ENCODE measurements at regions of chr16 and their contacts with region 1.

Region 1: GRCh38 chr16:67806428-67807147 is at the starts of genes RANBP10 and TSNAXIP1:
- DNase-seq: peak; percentile 100
- ATAC-seq: peak; percentile 95
- H3K4me3 ChIP-seq: peak within 1 kb of the TSS; percentile 92 to 98 (median 98)
- H3K27ac ChIP-seq: peak within 1 kb of the TSS; percentile 72
- H3K4me1 ChIP-seq: peaks cover 42% of the 10 kb centered on the region
- H3K27me3 ChIP-seq: no peaks in the 10 kb centered on the region; a peak in 1 of 5 replicates
- CTCF ChIP-seq: no peak
- EP300 ChIP-seq: peak in 1 of 2 experiments; percentile 33; a peak in 2 of 4 replicates
- POLR2A ChIP-seq: peak; percentile 84 to 94; a peak in 3 of 4 replicates
- RAD21 ChIP-seq: no peak; the same call in 1 of the 2 replicates
- total RNA-seq, gene RANBP10: 8.5 and 9.2 TPM in 2 replicates
- total RNA-seq, gene TSNAXIP1: 0.10 and 0.86 TPM in 2 replicates

Region 2: GRCh38 chr16:67667817-67668494 is 138.6 kb before region 1 on chr16:
- CTCF ChIA-PET with region 1: interaction called, 4 read pairs
- POLR2A ChIA-PET with region 1: interaction called, 12 read pairs
- in situ Hi-C with region 1: loop called (anchors 5 kb)
- intact Hi-C with region 1: loop called (anchors 2 kb)
- DNase-seq: peak; percentile 96
- ATAC-seq: peak; percentile 88
- H3K4me3 ChIP-seq: peak overlapping the region; percentile 77 to 96 (median 88)
- H3K27ac ChIP-seq: peak overlapping the region; percentile 21
- H3K4me1 ChIP-seq: peaks cover 39% of the 10 kb centered on the region
- H3K27me3 ChIP-seq: no peaks in the 10 kb centered on the region; a peak in 1 of 5 replicates
- CTCF ChIP-seq: peak; percentile 99
- EP300 ChIP-seq: no peak
- POLR2A ChIP-seq: peak in 1 of 2 experiments; percentile 24; a peak in 1 of 4 replicates
- RAD21 ChIP-seq: peak; percentile 98

Region 3: GRCh38 chr16:67672739-67673662 is 133.6 kb before region 1 on chr16:
- CTCF ChIA-PET with region 1: interaction called, 4 read pairs
- POLR2A ChIA-PET with region 1: interaction called, 12 read pairs
- in situ Hi-C with region 1: loop called (anchors 5 kb)
- intact Hi-C with region 1: loop called (anchors 2 kb)
- DNase-seq: peak; percentile 72
- ATAC-seq: peak; percentile 45
- H3K4me3 ChIP-seq: no peak overlapping the region
- H3K27ac ChIP-seq: no peak overlapping the region
- H3K4me1 ChIP-seq: peaks cover 21% of the 10 kb centered on the region
- H3K27me3 ChIP-seq: no peaks in the 10 kb centered on the region
- CTCF ChIP-seq: peak; percentile 95
- EP300 ChIP-seq: no peak
- POLR2A ChIP-seq: no peak
- RAD21 ChIP-seq: peak; percentile 93

Region 4: GRCh38 chr16:67719048-67719777 is 87.4 kb before region 1 on chr16 and contains the start of gene GFOD2:
- CTCF ChIA-PET with region 1: no interaction called
- POLR2A ChIA-PET with region 1: interaction called, 18 read pairs
- in situ Hi-C with region 1: no loop called
- intact Hi-C with region 1: loop called (anchors 5 kb)
- DNase-seq: peak; percentile 91
- ATAC-seq: peak; percentile 83
- H3K4me3 ChIP-seq: peak within 1 kb of the TSS; percentile 93 to 94 (median 94)
- H3K27ac ChIP-seq: peak within 1 kb of the TSS; percentile 67
- H3K4me1 ChIP-seq: peaks cover 42% of the 10 kb centered on the region
- H3K27me3 ChIP-seq: no peaks in the 10 kb centered on the region; a peak in 1 of 5 replicates
- CTCF ChIP-seq: peak; percentile 35
- EP300 ChIP-seq: no peak
- POLR2A ChIP-seq: peak; percentile 92 to 99
- RAD21 ChIP-seq: peak; percentile 23; the same call in 1 of the 2 replicates
- total RNA-seq, gene GFOD2: 17.2 and 17.6 TPM in 2 replicates

Region 5: GRCh38 chr16:67833418-67834241 is 27.0 kb after region 1 on chr16:
- CTCF ChIA-PET with region 1: no interaction called
- POLR2A ChIA-PET with region 1: interaction called, 13 read pairs
- in situ Hi-C with region 1: no loop called
- intact Hi-C with region 1: no loop called
- DNase-seq: peak; percentile 89
- ATAC-seq: peak; percentile 98
- H3K4me3 ChIP-seq: peak overlapping the region; percentile 75 to 91 (median 75)
- H3K27ac ChIP-seq: peak overlapping the region; percentile 59
- H3K4me1 ChIP-seq: peaks cover 37% of the 10 kb centered on the region
- H3K27me3 ChIP-seq: no peaks in the 10 kb centered on the region; a peak in 1 of 5 replicates
- CTCF ChIP-seq: no peak; the same call in 1 of the 2 replicates
- EP300 ChIP-seq: 0 out of 4 replicates have a peak, but pooled peaks of 1 of the 2 experiments have one; percentile 41
- POLR2A ChIP-seq: peak; percentile 92 to 99
- RAD21 ChIP-seq: peak; percentile 36; the same call in 1 of the 2 replicates

Region 6: DNA sequence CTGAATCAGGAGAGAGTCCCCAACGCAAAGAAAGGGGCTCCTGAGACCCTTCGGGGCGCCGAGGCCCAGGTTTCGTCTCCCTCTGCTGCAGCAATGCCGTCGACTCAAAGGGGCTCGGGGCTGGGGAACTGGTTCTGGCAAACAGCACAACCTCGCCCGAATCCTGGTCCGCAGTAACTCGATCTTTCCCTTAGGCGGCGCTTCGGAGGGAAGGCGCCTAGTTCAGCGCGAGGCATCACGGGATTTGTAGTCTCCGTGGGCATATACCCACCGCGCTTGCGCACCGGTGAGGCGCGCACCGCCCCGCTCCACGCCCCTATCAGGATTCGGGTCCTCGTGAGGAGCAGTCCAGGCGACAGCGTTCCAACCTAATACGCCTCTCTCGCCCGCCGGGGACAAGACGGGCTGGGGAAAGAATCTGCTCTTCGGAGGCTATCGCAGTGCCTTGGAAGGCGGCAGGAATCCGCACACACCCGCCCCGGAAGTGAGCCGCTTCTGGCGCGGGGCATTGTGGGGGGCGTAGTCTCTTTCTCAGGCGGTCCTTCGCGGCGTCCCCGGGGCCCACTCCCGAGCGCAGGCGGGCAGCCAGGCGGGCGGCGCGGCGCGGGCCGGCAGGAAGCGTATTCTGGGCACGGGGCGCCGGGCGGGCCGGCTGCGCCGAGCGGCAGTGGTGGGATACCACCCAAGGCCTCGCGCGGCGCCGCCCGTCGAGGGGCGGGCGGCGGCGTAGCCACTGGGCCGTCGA is 35.3 kb after region 1 on chr16 and contains the start of gene THAP11:
- CTCF ChIA-PET with region 1: no interaction called
- POLR2A ChIA-PET with region 1: interaction called, 10 read pairs
- in situ Hi-C with region 1: no loop called
- intact Hi-C with region 1: no loop called
- DNase-seq: peak; percentile 96
- ATAC-seq: peak; percentile 46
- H3K4me3 ChIP-seq: peak within 1 kb of the TSS; percentile 80 to 97 (median 92)
- H3K27ac ChIP-seq: peak within 1 kb of the TSS; percentile 92
- H3K4me1 ChIP-seq: peaks cover 52% of the 10 kb centered on the region
- H3K27me3 ChIP-seq: no peaks in the 10 kb centered on the region; a peak in 1 of 5 replicates
- CTCF ChIP-seq: peak; percentile 99
- EP300 ChIP-seq: 0 out of 4 replicates have a peak, but pooled peaks of 1 of the 2 experiments have one; percentile 2
- POLR2A ChIP-seq: peak in 1 of 2 experiments; percentile 68; a peak in 1 of 4 replicates
- RAD21 ChIP-seq: peak; percentile 54
- total RNA-seq, gene THAP11: 53.4 and 53.8 TPM in 2 replicates

Region 7: GRCh38 chr16:67928561-67929364 is 122.2 kb after region 1 on chr16:
- CTCF ChIA-PET with region 1: no interaction called
- POLR2A ChIA-PET with region 1: no interaction called
- in situ Hi-C with region 1: no loop called
- intact Hi-C with region 1: no loop called
- DNase-seq: peak; percentile 69
- ATAC-seq: peak; percentile 71
- H3K4me3 ChIP-seq: no peak overlapping the region
- H3K27ac ChIP-seq: no peak overlapping the region
- H3K4me1 ChIP-seq: peaks cover 3% of the 10 kb centered on the region
- H3K27me3 ChIP-seq: no peaks in the 10 kb centered on the region
- CTCF ChIP-seq: peak; percentile 99
- EP300 ChIP-seq: no peak
- POLR2A ChIP-seq: 0 out of 4 replicates have a peak, but pooled peaks of 1 of the 2 experiments have one; percentile 8
- RAD21 ChIP-seq: peak; percentile 98

Region 8: GRCh38 chr16:67942200-67942509 is 135.6 kb after region 1 on chr16:
- CTCF ChIA-PET with region 1: no interaction called
- POLR2A ChIA-PET with region 1: interaction called, 16 read pairs
- in situ Hi-C with region 1: no loop called
- intact Hi-C with region 1: no loop called
- DNase-seq: peak; percentile 61
- ATAC-seq: peak; percentile 44
- H3K4me3 ChIP-seq: no peak overlapping the region
- H3K27ac ChIP-seq: peak overlapping the region; percentile 85
- H3K4me1 ChIP-seq: peaks cover 59% of the 10 kb centered on the region
- H3K27me3 ChIP-seq: no peaks in the 10 kb centered on the region
- CTCF ChIP-seq: peak; percentile 91
- EP300 ChIP-seq: no peak
- POLR2A ChIP-seq: no peak
- RAD21 ChIP-seq: peak; percentile 53; the same call in 1 of the 2 replicates

Region 9: DNA sequence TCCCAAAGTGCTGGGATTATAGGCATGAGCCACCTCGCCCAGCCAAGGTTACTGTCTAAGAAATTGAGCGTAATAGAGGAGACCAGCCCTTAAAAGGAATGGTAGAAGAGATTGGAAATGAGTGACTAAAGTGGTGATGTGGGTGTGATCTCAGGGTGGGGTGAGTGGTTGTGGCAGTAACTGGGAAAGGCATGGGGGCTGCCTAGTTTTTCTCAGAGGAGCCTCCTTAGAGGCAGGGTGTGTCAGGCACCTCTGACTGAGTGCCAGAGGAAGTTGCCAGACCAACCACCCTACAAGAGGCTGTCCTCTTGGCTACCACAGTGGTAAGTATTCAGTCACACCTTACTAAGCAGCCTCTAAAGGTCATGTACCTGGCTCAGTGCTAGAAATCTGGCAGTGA is 225.4 kb after region 1 on chr16:
- CTCF ChIA-PET with region 1: no interaction called
- POLR2A ChIA-PET with region 1: no interaction called
- in situ Hi-C with region 1: no loop called
- intact Hi-C with region 1: no loop called
- DNase-seq: no peak
- ATAC-seq: no peak
- H3K4me3 ChIP-seq: no peak overlapping the region
- H3K27ac ChIP-seq: no peak overlapping the region
- H3K4me1 ChIP-seq: no peaks in the 10 kb centered on the region
- H3K27me3 ChIP-seq: no peaks in the 10 kb centered on the region
- CTCF ChIP-seq: no peak
- EP300 ChIP-seq: no peak
- POLR2A ChIP-seq: no peak
- RAD21 ChIP-seq: no peak

Measured in HepG2 (cell line).